ENCODE measurements at regions of chr22 and their contacts with region 1.

Region 1: GRCh38 chr22:39932918-39933649 is 27.1 kb upstream of the TMA7B start:
- DNase-seq: peak; percentile 74
- ATAC-seq: peak; percentile 35
- H3K4me3 Mint-ChIP-seq: peak overlapping the region; percentile 78
- H3K27ac Mint-ChIP-seq: peak overlapping the region; percentile 87
- H3K4me1 Mint-ChIP-seq: peaks cover 55% of the 10 kb centered on the region
- H3K27me3 Mint-ChIP-seq: no peaks in the 10 kb centered on the region

Region 2: DNA sequence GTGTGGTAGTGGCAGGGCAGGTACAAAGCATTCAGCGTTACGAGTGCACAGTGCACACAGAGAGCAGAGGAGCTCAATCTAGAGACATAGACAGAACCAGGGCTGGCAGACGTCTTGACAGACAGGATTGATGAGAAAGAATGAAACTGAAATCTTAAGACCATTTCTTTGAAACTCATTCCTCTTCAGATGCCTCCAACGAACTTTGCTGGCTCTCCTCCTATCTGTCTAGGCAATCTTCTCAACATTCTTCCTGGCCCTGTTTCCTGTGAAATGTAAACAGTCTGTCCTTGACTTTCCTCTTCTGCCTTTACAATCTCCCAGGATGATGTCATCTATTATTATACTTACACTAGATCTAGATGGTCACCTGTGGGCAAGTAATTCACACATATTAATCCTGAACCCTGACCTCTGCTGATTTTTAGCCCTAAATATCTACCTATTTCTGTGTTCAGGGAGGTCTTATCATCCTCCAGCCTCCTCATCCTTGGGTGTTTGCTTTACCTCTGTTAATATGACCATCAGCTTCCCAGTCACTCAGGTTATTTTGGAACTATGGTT is 159.0 kb before region 1 on chr22:
- POLR2A ChIA-PET with region 1: interaction called, 11 read pairs
- DNase-seq: peak; percentile 38
- ATAC-seq: peak; percentile 99
- H3K4me3 Mint-ChIP-seq: peak overlapping the region; percentile 40
- H3K27ac Mint-ChIP-seq: peak overlapping the region; percentile 87
- H3K4me1 Mint-ChIP-seq: peaks cover 24% of the 10 kb centered on the region
- H3K27me3 Mint-ChIP-seq: peaks cover 2% of the 10 kb centered on the region

Region 3: GRCh38 chr22:39908737-39909136 is 24.3 kb before region 1 on chr22:
- POLR2A ChIA-PET with region 1: interaction called, 543 read pairs
- DNase-seq: no peak
- ATAC-seq: peak; percentile 45
- H3K4me3 Mint-ChIP-seq: peak overlapping the region; percentile 99
- H3K27ac Mint-ChIP-seq: peak overlapping the region; percentile 96
- H3K4me1 Mint-ChIP-seq: peaks cover 65% of the 10 kb centered on the region
- H3K27me3 Mint-ChIP-seq: no peaks in the 10 kb centered on the region

Region 4: DNA sequence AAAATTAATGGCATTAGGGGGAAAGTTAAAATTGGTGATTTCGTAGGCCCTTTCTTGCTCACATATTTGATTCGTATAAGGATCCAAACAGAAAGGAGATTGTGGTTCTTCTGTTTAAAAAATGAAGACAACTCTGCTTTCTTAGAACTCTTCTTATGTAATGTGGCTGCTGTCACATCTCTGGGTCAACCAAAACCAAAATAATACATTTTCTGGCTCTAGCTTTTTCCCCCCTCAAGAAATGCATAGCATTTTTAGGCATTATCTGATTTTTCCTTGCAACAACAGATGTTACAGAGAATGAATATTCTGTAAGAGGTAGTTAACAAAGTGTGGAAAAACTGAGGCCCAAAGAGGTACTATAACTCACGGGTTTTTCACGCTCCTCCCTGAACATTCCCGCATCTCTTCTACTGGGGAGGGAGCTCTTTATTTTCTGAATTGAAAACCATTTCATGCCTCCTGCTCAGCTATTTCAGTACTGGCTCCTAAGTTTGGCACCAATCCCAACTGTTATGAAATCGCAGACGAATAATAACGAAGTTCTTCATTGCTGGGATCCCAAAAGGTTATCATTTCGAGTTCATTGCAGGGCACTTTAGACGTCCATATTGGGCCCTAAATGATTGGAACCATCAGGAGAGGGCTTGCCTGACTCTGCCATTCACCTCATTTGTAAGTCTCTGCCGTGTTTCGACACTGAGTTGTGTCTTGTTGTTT is 15.1 kb before region 1 on chr22:
- POLR2A ChIA-PET with region 1: interaction called, 543 read pairs
- DNase-seq: no peak
- ATAC-seq: no peak
- H3K4me3 Mint-ChIP-seq: peak overlapping the region; percentile 99
- H3K27ac Mint-ChIP-seq: peak overlapping the region; percentile 96
- H3K4me1 Mint-ChIP-seq: peaks cover 80% of the 10 kb centered on the region
- H3K27me3 Mint-ChIP-seq: no peaks in the 10 kb centered on the region

Region 5: GRCh38 chr22:39943337-39943736 is 10.3 kb after region 1 on chr22:
- POLR2A ChIA-PET with region 1: interaction called, 29 read pairs
- DNase-seq: no peak
- ATAC-seq: peak; percentile 51
- H3K4me3 Mint-ChIP-seq: peak overlapping the region; percentile 79
- H3K27ac Mint-ChIP-seq: peak overlapping the region; percentile 95
- H3K4me1 Mint-ChIP-seq: peaks cover 83% of the 10 kb centered on the region
- H3K27me3 Mint-ChIP-seq: no peaks in the 10 kb centered on the region

Region 6: DNA sequence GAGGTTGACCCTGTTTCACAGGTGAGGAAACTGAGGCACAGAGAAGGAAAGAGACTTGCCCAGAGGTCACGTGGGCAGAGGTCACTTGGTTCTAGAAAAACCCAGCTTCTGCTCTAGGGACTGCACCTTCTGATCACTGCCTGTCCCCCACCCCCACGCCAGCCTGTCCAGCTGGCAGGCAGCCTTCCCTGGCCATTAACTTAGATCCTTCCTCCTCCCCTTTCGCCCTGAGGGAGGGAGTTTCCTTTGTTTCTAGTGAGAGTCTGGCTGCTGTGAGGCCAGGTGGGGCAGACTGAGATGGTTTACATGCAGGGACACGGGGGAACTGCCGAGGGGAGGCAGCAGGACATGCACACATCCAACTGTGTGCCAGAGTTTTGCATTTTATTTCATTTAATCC is 64.9 kb after region 1 on chr22:
- POLR2A ChIA-PET with region 1: no interaction called
- DNase-seq: no peak
- ATAC-seq: no peak
- H3K4me3 Mint-ChIP-seq: no peak overlapping the region
- H3K27ac Mint-ChIP-seq: no peak overlapping the region
- H3K4me1 Mint-ChIP-seq: peaks cover 5% of the 10 kb centered on the region
- H3K27me3 Mint-ChIP-seq: peaks cover 41% of the 10 kb centered on the region

Measured in activated naive CD8-positive, alpha-beta T cell treated with anti-CD3 and anti-CD28 coated beads, Interleukin-2, amount 10 ng/mL, durations not matched to agents 7 days and 5 days (primary cell).